ENCODE measurements at regions of chr15 and their contacts with region 1.

Region 1: DNA sequence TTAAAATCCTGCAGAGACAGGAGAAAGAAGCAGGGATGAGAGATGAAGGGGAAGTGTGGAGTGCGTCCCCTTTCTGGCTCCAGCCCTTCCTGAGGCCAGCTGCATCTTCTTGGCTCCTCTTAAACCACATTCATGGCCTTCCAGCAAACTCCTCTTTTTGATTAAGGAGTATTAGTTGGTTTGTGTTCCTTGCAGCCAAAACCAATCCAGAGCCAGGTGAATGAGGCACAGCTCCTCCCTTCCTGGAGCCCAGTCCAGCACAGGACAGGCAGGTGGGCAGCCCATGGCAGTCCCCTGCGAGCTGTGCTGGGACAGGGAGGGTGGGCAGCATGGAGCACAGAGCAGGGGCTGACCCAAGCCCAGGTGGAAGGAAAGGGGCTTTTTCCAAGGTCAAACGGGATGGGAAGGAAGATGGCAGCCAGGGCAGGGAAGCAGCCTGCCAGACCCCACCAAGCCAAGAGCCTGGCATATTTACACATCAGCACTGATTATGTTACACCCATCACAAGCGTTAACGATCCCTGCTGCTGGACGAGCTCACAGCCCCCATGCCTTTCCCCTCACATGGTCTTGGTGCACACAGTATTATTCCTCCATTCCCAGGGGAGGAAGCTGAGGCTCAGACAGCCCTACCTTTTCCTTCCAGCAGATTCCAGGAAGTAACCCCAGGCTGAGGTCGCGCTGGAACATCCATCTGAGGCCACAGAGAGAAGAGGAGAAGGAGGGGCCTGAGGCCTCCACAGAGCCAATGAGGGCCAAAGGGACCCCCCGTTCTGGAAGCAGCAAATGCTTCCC is 175.6 kb downstream of the SMAD6 start:
- DNase-seq: no peak
- ATAC-seq: no peak
- H3K4me3 ChIP-seq: no peak overlapping the region
- H3K4me3 Mint-ChIP-seq: no peak overlapping the region
- H3K27ac ChIP-seq: no peak overlapping the region
- H3K27ac Mint-ChIP-seq: no peak overlapping the region
- H3K4me1 ChIP-seq: no peaks in the 10 kb centered on the region
- H3K4me1 Mint-ChIP-seq: no peaks in the 10 kb centered on the region
- H3K27me3 ChIP-seq: peaks cover 0 to 32% of the 10 kb centered on the region in 2 experiments
- H3K27me3 Mint-ChIP-seq: peaks cover 3 to 25% of the 10 kb centered on the region in 2 donors

Region 2: GRCh38 chr15:65783872-65784271 is 1093.8 kb before region 1 on chr15:
- CTCF ChIA-PET with region 1: no interaction called
- POLR2A ChIA-PET with region 1: interaction called in 1 of 2 experiments, 13 read pairs
- DNase-seq: no peak
- ATAC-seq: no peak
- H3K4me3 ChIP-seq: no peak overlapping the region
- H3K4me3 Mint-ChIP-seq: no peak overlapping the region
- H3K27ac ChIP-seq: no peak overlapping the region
- H3K27ac Mint-ChIP-seq: no peak overlapping the region
- H3K4me1 ChIP-seq: peaks cover 19 to 27% of the 10 kb centered on the region in 2 experiments
- H3K4me1 Mint-ChIP-seq: peaks cover 17 to 39% (median 33%) of the 10 kb centered on the region in 3 donors
- H3K27me3 ChIP-seq: no peaks in the 10 kb centered on the region
- H3K27me3 Mint-ChIP-seq: no peaks in the 10 kb centered on the region

Measured in T-cell (primary cell).